Activated CD4-positive, alpha-beta T cell treated with anti-CD3 and anti-CD28 coated beads, Interleukin-2, amount 10 ng/mL, durations not matched to agents 7 days and 5 days (primary cell): ENCODE measurements at regions of chr4 and their contacts with region 1.

Region 1: GRCh38 chr4:1726146-1726934 is 5.0 kb downstream of the TACC3 start:
- DNase-seq: peak; percentile 93
- H3K4me3 Mint-ChIP-seq: peak overlapping the region; percentile 19
- H3K27ac Mint-ChIP-seq: peak overlapping the region; percentile 73
- H3K4me1 Mint-ChIP-seq: peaks cover 71% of the 10 kb centered on the region
- H3K27me3 Mint-ChIP-seq: no peaks in the 10 kb centered on the region

Region 2: DNA sequence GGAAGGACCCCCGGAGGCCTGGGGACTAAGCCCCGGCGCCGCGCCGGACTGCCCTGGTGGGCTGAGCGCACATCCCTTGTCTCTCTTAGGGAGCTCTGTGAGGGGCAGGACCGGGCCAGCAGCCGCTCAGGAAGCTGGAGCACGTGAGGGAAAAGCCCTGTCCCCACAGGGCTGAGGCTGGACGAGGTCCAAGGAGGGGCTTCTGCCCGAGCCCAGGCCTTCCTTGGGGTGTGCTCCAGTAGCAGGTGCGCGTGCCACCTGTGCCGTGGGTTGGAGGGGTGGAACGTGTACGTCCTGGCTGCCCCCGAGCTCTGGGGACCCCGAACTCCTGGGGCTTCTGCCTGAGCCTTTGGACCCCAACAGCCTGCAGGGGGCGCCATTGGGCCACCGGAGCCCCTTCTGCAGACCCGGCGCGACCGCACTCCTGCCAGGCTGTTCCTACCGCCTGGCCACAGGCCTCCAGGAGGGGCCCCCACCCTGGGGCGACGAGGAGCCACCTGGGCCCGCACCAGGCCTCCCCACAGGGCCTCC is 22.2 kb after region 1 on chr4:
- CTCF ChIA-PET with region 1: interaction called, 10 read pairs
- POLR2A ChIA-PET with region 1: no interaction called
- DNase-seq: peak; percentile 85
- H3K4me3 Mint-ChIP-seq: no peak overlapping the region
- H3K27ac Mint-ChIP-seq: no peak overlapping the region
- H3K4me1 Mint-ChIP-seq: peaks cover 3% of the 10 kb centered on the region
- H3K27me3 Mint-ChIP-seq: no peaks in the 10 kb centered on the region